ENCODE measurements at regions of chr12 and their contacts with region 1.

Region 1: GRCh38 chr12:113048716-113049127 is 7.8 kb upstream of the DTX1 start:
- DNase-seq: peak; percentile 42 to 48
- H3K4me3 ChIP-seq: no peak overlapping the region
- H3K27ac ChIP-seq: no peak overlapping the region
- H3K4me1 ChIP-seq: no peaks in the 10 kb centered on the region
- H3K27me3 ChIP-seq: peaks cover 22% of the 10 kb centered on the region
- CTCF ChIP-seq: peak; percentile 86

Region 2: DNA sequence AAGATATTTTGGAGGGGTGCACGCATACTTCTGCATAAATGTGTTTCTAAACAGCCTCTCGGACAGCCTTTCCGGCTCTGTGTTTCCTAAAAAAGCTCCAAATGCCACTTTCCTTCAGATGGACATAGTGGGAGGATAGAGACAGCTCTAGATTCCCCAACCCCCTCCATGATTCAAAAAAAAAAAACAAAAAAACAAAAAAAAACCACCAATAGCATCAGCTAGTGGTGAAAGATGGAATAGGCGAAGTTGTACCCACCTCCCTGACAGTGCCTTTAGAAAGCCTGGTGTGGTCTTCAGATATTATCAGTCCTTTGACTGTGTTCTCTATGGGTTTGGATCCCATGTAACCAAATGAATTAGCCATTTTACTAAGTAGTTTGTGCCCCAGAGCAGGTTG is 1773.9 kb before region 1 on chr12:
- CTCF ChIA-PET with region 1: no interaction called
- POLR2A ChIA-PET with region 1: interaction called, 16 read pairs
- intact Hi-C with region 1: no loop called
- DNase-seq: no peak
- H3K4me3 ChIP-seq: no peak overlapping the region
- H3K27ac ChIP-seq: no peak overlapping the region
- H3K4me1 ChIP-seq: no peaks in the 10 kb centered on the region
- H3K27me3 ChIP-seq: peaks cover 31% of the 10 kb centered on the region; the same call in 1 of the 2 replicates
- CTCF ChIP-seq: peak; percentile 62

Region 3: GRCh38 chr12:113098446-113098896 is 49.7 kb after region 1 on chr12:
- CTCF ChIA-PET with region 1: no interaction called
- POLR2A ChIA-PET with region 1: no interaction called
- intact Hi-C with region 1: loop called (anchors 5 kb)
- DNase-seq: peak; percentile 90 to 93
- H3K4me3 ChIP-seq: no peak overlapping the region
- H3K27ac ChIP-seq: peak overlapping the region; percentile 24; the same call in 1 of the 2 replicates
- H3K4me1 ChIP-seq: 0 out of 2 replicates have a peak, but pooled peaks cover 4% of the 10 kb centered on the region
- H3K27me3 ChIP-seq: no peaks in the 10 kb centered on the region
- CTCF ChIP-seq: peak; percentile 93

Region 4: DNA sequence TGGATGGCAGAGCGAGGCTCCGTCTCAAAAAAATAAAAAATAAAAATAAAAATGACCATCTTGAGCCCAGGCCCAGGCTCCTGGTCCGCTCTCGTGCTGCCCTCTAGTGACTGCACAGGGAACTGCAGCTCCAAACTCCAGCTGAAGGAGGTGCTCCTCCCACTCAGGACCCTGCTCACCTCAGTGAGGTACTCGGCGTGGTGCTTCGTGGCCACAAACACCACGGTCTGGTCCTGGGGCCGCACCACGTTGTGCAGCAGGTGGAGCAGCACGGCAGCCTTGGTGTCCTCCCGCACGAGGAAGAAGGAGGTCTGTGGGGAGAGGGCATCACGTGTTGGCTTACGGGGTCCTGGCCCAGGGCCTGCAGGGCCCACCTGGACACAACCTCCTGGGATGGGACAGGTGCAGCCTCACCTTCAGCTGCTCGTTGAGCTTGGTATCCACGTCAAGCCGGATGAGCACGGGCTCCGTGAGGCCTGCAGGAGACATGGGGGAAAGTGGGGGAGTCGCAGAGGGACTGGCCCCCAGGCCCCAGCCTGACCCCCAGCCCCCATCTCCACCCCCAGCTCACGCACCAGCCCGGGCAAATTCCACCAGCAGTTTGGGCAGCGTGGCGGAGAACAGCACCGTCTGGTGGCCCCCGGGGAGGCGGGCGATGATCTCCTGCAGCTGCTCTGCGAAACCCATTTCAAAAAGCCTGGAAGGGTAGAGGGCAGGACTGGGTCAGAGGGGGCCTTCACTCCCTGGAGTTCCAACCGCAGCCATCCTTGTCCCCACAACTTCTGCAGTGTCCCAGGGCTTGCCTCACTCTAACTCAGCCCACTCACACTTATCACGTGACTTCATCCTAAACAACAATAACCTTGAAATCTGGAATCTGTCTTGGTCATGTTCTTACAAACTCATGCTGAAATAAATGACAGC is 126.0 kb after region 1 on chr12:
- CTCF ChIA-PET with region 1: no interaction called
- POLR2A ChIA-PET with region 1: no interaction called
- intact Hi-C with region 1: loop called (anchors 1 kb)
- DNase-seq: peak; percentile 50 to 75
- H3K4me3 ChIP-seq: no peak overlapping the region
- H3K27ac ChIP-seq: no peak overlapping the region
- H3K4me1 ChIP-seq: no peaks in the 10 kb centered on the region
- H3K27me3 ChIP-seq: no peaks in the 10 kb centered on the region
- CTCF ChIP-seq: peak; percentile 99

Region 5: GRCh38 chr12:113271853-113272561 is 223.3 kb after region 1 on chr12:
- CTCF ChIA-PET with region 1: no interaction called
- POLR2A ChIA-PET with region 1: no interaction called
- intact Hi-C with region 1: no loop called
- DNase-seq: no peak
- H3K4me3 ChIP-seq: no peak overlapping the region
- H3K27ac ChIP-seq: no peak overlapping the region
- H3K4me1 ChIP-seq: no peaks in the 10 kb centered on the region
- H3K27me3 ChIP-seq: no peaks in the 10 kb centered on the region
- CTCF ChIP-seq: no peak

Measured in PC-9 (cell line).